ENCODE measurements at regions of chr21 and their contacts with region 1.

Region 1: DNA sequence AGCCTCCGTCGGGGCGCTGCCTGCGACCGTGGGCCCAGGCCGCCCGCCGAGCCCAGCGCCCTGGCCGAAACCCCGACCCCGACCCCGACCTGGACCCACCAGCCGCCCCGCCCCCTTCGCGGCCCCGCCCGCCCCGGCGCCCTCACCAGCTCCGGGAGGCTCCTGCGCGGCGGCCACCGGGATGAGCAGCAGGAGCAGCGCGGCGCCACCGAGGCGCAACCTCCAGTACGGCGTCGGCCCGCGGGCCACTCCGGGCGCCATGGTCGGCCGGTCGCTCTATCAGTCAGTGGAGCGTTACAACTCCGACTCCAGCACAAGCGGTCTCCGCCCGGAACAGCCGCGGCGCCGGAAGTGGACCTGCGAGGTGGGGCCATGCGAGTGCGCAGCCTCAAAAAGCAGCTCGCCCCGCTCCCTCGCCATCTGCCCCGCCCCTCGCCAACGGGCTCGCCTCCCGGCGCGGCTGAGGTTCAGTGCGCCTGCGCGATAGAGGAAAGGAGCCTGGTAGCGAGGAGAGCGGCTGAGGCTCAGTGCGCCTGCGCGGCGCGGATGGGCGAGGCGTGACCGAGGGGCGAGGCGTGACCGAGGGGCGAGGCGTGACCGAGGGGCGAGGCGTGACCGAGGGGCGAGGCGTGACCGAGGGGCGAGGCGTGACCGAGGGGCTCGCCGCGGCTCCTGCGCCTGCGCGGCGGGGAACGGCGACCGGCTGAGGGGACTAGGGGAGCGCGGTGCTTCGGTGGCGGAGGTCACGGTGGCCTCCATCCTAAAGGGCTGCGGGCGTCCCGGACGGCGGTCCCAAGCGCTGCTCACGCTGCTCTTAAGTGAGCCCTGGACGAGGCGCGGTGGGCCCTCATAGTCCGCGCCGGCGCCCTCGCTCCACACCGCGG is at the start of gene PTTG1IP:
- DNase-seq: peak; percentile 100
- H3K4me3 Mint-ChIP-seq: peak within 1 kb of the TSS; percentile 89
- H3K27ac Mint-ChIP-seq: peak within 1 kb of the TSS; percentile 83
- H3K4me1 Mint-ChIP-seq: peaks cover 49% of the 10 kb centered on the region
- H3K27me3 Mint-ChIP-seq: no peaks in the 10 kb centered on the region
- total RNA-seq, gene PTTG1IP: 43.0 to 44.4 TPM

Region 2: DNA sequence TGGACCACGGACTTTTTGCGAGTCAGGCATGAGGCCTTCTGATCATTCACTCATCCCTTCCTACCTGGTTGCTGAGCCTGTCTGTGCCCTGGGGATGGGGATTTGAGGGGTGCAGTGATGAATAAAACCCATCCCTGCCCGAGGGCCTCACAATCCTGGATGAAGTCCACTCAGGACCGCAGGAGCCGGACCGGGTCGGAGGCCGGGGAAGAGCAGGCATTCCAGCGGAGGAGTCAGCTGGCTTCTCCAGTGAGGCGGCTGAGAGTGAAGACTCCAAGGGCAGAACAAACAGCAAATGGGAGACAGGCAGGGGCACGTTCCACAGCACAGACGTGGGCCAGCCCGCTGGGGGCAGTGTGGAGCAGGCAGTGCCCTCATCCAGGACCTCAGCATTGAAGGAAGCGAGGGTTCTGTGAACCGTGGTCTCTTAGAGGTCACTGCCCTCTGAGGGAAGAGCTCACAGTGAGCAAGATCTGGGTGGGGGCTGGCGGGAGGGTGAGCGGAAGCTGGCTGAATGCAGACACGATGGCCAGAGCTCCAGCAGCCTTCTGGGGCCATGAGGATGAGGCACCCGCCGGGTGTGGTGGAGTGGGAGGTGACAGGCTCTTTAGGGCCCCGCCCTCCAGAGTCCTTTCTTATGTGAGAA is 429.2 kb before region 1 on chr21:
- CTCF ChIA-PET with region 1: no interaction called
- POLR2A ChIA-PET with region 1: no interaction called
- intact Hi-C with region 1: no loop called
- DNase-seq: no peak
- H3K4me3 Mint-ChIP-seq: no peak overlapping the region
- H3K27ac Mint-ChIP-seq: no peak overlapping the region
- H3K4me1 Mint-ChIP-seq: no peaks in the 10 kb centered on the region
- H3K27me3 Mint-ChIP-seq: peaks cover 6% of the 10 kb centered on the region

Region 3: GRCh38 chr21:44792702-44793591 is 80.7 kb before region 1 on chr21:
- CTCF ChIA-PET with region 1: interaction called, 21 read pairs
- POLR2A ChIA-PET with region 1: interaction called, 3 read pairs
- intact Hi-C with region 1: no loop called
- DNase-seq: peak; percentile 61
- H3K4me3 Mint-ChIP-seq: no peak overlapping the region
- H3K27ac Mint-ChIP-seq: peak overlapping the region; percentile 18
- H3K4me1 Mint-ChIP-seq: peaks cover 62% of the 10 kb centered on the region
- H3K27me3 Mint-ChIP-seq: no peaks in the 10 kb centered on the region

Region 4: GRCh38 chr21:44817506-44817880 is 56.1 kb before region 1 on chr21:
- CTCF ChIA-PET with region 1: interaction called, 3 read pairs
- POLR2A ChIA-PET with region 1: interaction called, 9 read pairs
- intact Hi-C with region 1: loop called (anchors 1 kb)
- DNase-seq: peak; percentile 95
- H3K4me3 Mint-ChIP-seq: peak overlapping the region; percentile 72
- H3K27ac Mint-ChIP-seq: peak overlapping the region; percentile 33
- H3K4me1 Mint-ChIP-seq: peaks cover 11% of the 10 kb centered on the region
- H3K27me3 Mint-ChIP-seq: no peaks in the 10 kb centered on the region

Region 5: GRCh38 chr21:44920694-44921604 is 47.4 kb after region 1 on chr21 and contains the start of gene ITGB2:
- CTCF ChIA-PET with region 1: interaction called, 4 read pairs
- POLR2A ChIA-PET with region 1: interaction called, 4 read pairs
- intact Hi-C with region 1: loop called (anchors 2 kb)
- DNase-seq: peak; percentile 83
- H3K4me3 Mint-ChIP-seq: peak within 1 kb of the TSS; percentile 100
- H3K27ac Mint-ChIP-seq: peak within 1 kb of the TSS; percentile 95
- H3K4me1 Mint-ChIP-seq: peaks cover 61% of the 10 kb centered on the region
- H3K27me3 Mint-ChIP-seq: no peaks in the 10 kb centered on the region
- total RNA-seq, gene ITGB2: 242 to 247 TPM

Region 6: DNA sequence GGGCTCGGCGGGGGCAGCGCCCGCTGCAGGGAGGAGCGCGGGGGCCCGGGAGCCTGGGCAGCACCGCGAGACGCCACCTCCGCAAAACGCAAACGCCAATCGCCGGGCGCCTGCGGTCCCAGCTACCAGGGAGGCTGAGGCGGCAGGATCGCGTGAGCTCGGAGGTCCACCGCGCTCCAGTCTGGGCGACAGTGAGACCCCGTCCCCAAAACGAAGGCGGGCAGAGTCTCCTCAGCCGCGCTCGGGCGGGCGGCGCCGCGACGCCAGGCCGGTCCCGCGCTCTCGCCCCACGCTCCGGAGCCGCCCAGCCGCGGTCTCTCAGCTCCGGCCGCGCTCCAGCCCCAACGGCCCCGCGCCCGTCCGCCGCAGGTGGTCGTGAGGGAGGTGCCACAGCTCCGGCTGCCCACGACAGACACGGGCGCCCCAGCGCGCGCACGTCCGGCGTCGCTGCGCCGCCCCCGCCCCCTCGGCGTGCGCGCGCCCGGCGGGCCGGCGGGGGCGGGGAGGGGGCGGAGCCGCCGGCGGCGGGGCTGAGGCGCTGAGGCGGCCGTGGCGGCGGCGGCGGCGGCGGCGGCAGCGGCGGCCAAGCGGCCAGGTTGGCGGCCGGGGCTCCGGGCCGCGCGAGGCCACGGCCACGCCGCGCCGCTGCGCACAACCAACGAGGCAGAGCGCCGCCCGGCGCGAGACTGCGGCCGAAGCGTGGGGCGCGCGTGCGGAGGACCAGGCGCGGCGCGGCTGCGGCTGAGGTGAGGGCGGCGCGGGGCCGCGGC is 200.6 kb after region 1 on chr21 and contains the start of gene ADARB1:
- CTCF ChIA-PET with region 1: no interaction called
- POLR2A ChIA-PET with region 1: no interaction called
- intact Hi-C with region 1: loop called (anchors 5 kb)
- DNase-seq: peak; percentile 64
- H3K4me3 Mint-ChIP-seq: peak within 1 kb of the TSS; percentile 84
- H3K27ac Mint-ChIP-seq: peak within 1 kb of the TSS; percentile 75
- H3K4me1 Mint-ChIP-seq: peaks cover 43% of the 10 kb centered on the region
- H3K27me3 Mint-ChIP-seq: no peaks in the 10 kb centered on the region
- total RNA-seq, gene ADARB1: 37.6 to 40.6 TPM

Measured in activated CD4-positive, alpha-beta memory T cell treated with anti-CD3 and anti-CD28 coated beads for 36 hours (primary cell).